Naive thymus-derived CD8-positive, alpha-beta T cell (primary cell): ENCODE measurements at regions of chr19 and their contacts with region 1.

Region 1: GRCh38 chr19:860481-861101 is 1.1 kb downstream of the CFD start:
- DNase-seq: peak in 9 of 10 donors; percentile 39 to 74 (median 59)
- ATAC-seq: peak; percentile 56 to 59
- H3K4me3 Mint-ChIP-seq: peak overlapping the region in 6 of 10 donors; percentile 28 to 60 (median 49)
- H3K27ac Mint-ChIP-seq: no peak overlapping the region
- H3K4me1 Mint-ChIP-seq: peaks cover 7 to 28% (median 17%) of the 10 kb centered on the region in 4 donors
- H3K27me3 Mint-ChIP-seq: peaks cover 0 to 11% (median 0%) of the 10 kb centered on the region in 5 donors

Region 2: DNA sequence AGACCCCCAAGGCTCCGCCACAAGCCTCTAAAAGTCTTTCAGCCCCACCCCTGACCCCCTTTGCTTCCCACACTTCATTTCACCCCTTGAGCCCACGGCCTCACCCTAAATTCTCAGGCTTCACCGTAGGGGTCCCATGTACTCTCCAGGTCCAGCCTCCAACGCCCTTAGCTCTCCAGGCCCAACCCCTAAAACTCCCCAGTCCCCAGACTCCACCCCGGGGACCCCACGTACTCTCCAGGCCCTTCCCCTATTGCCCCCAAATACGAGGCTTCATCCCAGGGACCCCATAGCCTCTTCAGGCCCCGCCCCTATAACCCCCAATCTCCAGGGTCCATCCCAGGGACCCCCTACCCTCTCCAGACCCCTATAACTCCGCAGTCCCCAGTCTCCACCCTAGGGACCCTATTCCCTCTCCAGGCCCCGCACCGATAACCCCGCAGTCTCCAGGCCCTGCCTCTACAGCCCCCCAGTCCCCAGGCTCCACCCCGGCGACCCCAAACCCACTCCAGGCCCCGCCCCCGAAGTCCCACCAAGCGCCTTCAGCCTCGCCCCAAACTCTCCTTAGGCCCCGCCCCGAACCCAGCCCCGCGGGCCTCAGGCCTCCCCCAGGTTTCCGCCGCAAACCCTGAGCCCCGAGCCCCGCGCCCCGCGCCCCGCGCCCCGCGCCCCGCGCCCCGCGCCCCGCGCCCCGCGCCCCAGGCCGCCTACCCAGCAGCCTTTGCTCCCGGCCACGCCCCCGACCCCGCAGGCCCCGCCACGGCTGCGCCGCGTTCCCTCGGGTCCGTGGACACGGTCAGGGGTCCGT is 31.9 kb after region 1 on chr19:
- POLR2A ChIA-PET with region 1: interaction called, 17 read pairs
- DNase-seq: peak in 1 of 10 donors; percentile 53
- ATAC-seq: peak; percentile 49 to 59
- H3K4me3 Mint-ChIP-seq: peak overlapping the region; percentile 77 to 96 (median 90)
- H3K27ac Mint-ChIP-seq: peak overlapping the region; percentile 66 to 100 (median 97)
- H3K4me1 Mint-ChIP-seq: peaks cover 6 to 41% (median 32%) of the 10 kb centered on the region in 4 donors
- H3K27me3 Mint-ChIP-seq: peaks cover 0 to 3% (median 0%) of the 10 kb centered on the region in 5 donors

Region 3: DNA sequence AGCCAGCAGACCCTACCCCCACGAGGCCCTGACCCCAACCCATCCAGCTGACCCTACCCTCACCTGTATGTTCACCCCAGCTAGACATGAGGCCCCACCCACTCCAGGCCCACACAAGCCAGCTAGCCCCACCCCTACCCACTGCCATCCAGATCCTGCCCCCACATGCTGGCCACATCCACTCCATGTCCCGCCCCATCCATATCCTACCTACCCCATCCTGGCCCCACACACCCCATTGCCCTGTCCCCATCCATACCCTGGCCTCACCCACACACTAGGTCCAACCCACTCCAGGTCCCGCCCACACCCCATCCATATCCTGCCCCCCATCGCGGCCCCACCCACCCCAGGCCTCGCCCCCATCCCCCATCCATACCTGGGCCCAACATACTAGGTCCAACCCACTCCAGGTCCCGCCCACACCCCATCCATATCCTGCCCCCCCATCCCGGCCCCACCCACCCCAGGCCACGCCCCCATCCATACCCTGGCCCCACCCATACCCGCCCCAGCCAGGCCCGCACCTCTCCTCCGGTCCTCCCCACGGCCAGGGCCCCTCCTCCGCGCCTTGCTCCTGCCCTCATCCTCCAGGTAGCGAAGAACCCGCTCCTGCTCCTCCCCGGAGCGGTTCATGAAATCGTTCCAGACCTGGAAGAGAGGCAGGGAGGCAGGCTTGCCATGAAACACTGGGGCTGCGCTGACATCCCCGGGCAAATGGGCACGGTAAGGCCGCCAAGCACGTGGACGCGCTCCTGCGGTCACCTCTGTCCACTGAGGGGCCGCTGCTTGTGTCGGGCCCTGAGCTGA is 39.9 kb after region 1 on chr19:
- POLR2A ChIA-PET with region 1: interaction called, 69 read pairs
- DNase-seq: peak in 2 of 10 donors; percentile 39 to 74
- ATAC-seq: peak; percentile 33 to 62
- H3K4me3 Mint-ChIP-seq: no peak overlapping the region
- H3K27ac Mint-ChIP-seq: peak overlapping the region in 5 of 10 donors; percentile 38 to 83 (median 51)
- H3K4me1 Mint-ChIP-seq: peaks cover 5 to 46% (median 15%) of the 10 kb centered on the region in 4 donors
- H3K27me3 Mint-ChIP-seq: peaks cover 0 to 3% (median 0%) of the 10 kb centered on the region in 5 donors

Region 4: DNA sequence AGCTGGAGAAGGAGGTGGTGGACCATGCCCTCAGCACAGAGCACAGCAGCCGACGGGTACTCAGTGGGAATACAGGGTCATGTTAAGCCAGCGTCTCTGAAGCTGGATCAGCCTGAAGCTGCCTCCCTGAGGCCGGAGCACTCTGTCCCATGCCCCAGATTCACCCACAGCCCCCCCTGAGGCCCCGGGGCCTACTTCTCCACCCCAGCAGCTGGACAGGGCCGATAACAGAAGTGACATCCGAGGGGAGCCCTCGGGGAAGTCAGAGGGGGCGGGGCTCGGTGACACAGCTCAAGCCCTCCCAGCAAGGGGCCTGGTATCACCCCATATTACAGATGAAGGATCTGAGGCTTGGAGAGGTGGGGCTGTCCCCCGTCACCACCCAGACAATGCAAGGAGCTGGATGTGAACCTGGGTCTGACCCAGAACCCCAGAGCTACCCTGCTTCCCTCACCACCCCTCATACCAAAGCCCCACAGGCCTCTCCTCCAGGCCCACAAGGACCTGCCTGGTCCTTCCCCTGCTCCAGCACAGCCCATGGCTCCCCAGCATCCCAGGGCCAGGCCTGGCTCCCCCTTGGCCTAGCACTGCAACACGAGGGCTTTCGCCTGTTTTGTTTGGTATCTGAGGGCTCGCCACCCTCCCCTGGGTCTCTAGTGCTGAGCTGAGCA is 46.7 kb after region 1 on chr19:
- POLR2A ChIA-PET with region 1: interaction called, 69 read pairs
- DNase-seq: peak in 3 of 10 donors; percentile 45 to 49 (median 47)
- ATAC-seq: peak in 1 of 2 donors; percentile 4
- H3K4me3 Mint-ChIP-seq: peak overlapping the region; percentile 48 to 91 (median 86)
- H3K27ac Mint-ChIP-seq: peak overlapping the region; percentile 99 to 100 (median 100)
- H3K4me1 Mint-ChIP-seq: peaks cover 14 to 72% (median 62%) of the 10 kb centered on the region in 4 donors
- H3K27me3 Mint-ChIP-seq: no peaks in the 10 kb centered on the region

Region 5: DNA sequence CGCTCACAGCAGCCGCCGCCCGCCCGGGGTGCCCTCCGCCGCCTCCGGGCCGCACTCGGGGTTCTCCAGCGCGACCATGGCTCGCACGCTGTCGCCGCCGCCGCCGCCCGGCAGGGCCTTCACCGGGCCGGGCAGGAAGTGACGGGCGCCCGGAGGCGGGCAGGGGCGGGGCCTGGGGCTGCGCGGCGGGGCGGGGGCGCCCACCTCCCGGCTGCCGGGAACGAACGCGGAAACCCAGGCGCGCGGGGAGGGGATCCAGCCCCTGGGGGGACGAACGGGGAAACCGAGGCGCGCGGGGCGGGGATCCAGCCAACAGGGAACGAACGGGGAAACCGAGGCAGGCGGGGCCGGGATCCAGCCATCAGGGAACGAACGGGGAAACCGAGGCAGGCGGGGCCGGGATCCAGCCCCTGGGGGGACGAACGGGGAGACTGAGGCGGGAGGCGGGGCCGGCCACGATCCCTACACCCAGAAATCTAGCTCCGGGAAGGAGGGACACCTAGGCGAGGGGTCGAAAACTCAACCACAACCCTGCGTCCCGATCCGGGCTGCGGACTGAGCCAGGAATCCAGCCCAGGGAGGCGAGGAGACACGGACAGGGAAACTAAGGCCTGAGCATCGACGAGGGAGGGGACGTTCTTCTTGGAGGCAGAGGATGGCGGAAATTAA is 52.6 kb after region 1 on chr19 and contains the start of gene R3HDM4:
- POLR2A ChIA-PET with region 1: interaction called, 165 read pairs
- DNase-seq: peak; percentile 75 to 89 (median 82)
- ATAC-seq: peak; percentile 40 to 46
- H3K4me3 Mint-ChIP-seq: peak within 1 kb of the TSS; percentile 81 to 92 (median 85)
- H3K27ac Mint-ChIP-seq: peak within 1 kb of the TSS; percentile 80 to 98 (median 94)
- H3K4me1 Mint-ChIP-seq: peaks cover 15 to 41% (median 31%) of the 10 kb centered on the region in 4 donors
- H3K27me3 Mint-ChIP-seq: peaks cover 0 to 2% (median 0%) of the 10 kb centered on the region in 5 donors
- polyA plus RNA-seq, gene R3HDM4: 137 to 238 (median 182) TPM

Region 6: GRCh38 chr19:925526-926322 is 65.1 kb after region 1 on chr19 and contains the start of gene ARID3A:
- POLR2A ChIA-PET with region 1: interaction called, 165 read pairs
- DNase-seq: peak; percentile 46 to 86 (median 70)
- ATAC-seq: peak; percentile 60 to 76
- H3K4me3 Mint-ChIP-seq: peak within 1 kb of the TSS; percentile 67 to 87 (median 78)
- H3K27ac Mint-ChIP-seq: peak within 1 kb of the TSS in 8 of 10 donors; percentile 22 to 83 (median 58)
- H3K4me1 Mint-ChIP-seq: peaks cover 7 to 30% (median 17%) of the 10 kb centered on the region in 4 donors
- H3K27me3 Mint-ChIP-seq: no peaks in the 10 kb centered on the region
- polyA plus RNA-seq, gene ARID3A: 0.09 to 0.58 (median 0.16) TPM